ENCODE measurements at regions of chr10 and their contacts with region 1.

Region 1: GRCh38 chr10:123582084-123582989 is 83.8 kb upstream of the GPR26 start:
- DNase-seq: peak; percentile 75 to 90
- H3K4me3 ChIP-seq: no peak overlapping the region
- H3K27ac ChIP-seq: no peak overlapping the region
- H3K4me1 ChIP-seq: peaks cover 10 to 18% (median 14%) of the 10 kb centered on the region in 4 donors
- H3K27me3 ChIP-seq: peaks cover 0 to 52% (median 11%) of the 10 kb centered on the region in 3 donors
- CTCF ChIP-seq: peak in 5 of 7 experiments; percentile 27 to 81 (median 69)
- EP300 ChIP-seq: no peak
- POLR2A ChIP-seq: no peak

Region 2: DNA sequence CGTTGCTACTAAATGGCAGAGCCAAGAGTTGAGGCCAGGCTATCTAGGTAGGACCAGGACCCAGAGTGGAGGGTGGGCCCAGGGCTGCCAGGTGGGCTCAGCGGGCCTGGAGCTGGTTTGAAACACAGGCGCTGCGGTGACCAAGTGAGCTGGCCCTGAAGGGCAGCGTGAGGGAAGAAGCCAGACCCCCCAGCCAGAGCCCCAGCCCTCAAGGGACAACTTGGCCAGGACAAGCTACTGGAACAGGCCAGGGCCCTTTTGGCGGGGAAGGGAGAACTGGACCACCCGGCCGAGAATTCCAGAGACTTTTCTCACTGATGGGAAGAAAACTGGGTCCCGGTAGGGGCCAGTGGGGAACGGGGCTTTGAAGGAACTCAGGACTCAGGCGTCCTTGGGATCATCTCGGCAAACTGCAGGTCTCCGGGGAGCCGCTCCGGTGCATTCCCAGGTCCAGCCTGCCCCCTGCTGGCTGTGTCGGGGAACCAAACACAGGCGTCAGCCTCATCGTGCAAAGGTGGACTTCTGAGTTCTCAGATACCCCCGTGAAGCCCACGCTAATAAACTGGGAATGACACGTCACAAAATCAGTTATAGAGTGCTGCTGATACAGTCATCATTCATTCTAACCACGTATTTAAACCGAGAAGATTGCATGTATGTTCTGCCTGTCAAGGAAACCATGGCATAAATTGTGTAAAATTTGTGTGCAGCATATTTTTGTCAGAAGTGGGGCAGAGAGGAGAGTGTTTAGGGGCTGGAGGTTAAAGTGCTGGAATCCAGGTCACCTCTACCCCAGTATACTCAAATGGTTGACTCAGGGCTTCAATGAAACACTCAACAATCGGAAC is 385.3 kb after region 1 on chr10:
- intact Hi-C with region 1: loop called (anchors 2 kb)
- DNase-seq: peak; percentile 67 to 83
- H3K4me3 ChIP-seq: no peak overlapping the region
- H3K27ac ChIP-seq: no peak overlapping the region
- H3K4me1 ChIP-seq: peaks cover 0 to 23% (median 12%) of the 10 kb centered on the region in 4 donors
- H3K27me3 ChIP-seq: peaks cover 0 to 98% (median 68%) of the 10 kb centered on the region in 3 donors
- CTCF ChIP-seq: peak in 6 of 7 experiments; percentile 61 to 88 (median 74)
- EP300 ChIP-seq: no peak
- POLR2A ChIP-seq: no peak

Region 3: GRCh38 chr10:124388823-124389612 is 806.7 kb after region 1 on chr10:
- intact Hi-C with region 1: loop called (anchors 10 kb)
- DNase-seq: peak; percentile 95 to 97
- H3K4me3 ChIP-seq: peak overlapping the region; percentile 46 to 58 (median 50)
- H3K27ac ChIP-seq: peak overlapping the region in 3 of 5 donors; percentile 12 to 68 (median 19)
- H3K4me1 ChIP-seq: peaks cover 6 to 15% (median 12%) of the 10 kb centered on the region in 4 donors
- H3K27me3 ChIP-seq: peaks cover 0 to 12% (median 0%) of the 10 kb centered on the region in 3 donors
- CTCF ChIP-seq: peak in 5 of 7 experiments; percentile 79 to 98 (median 88)
- EP300 ChIP-seq: no peak
- POLR2A ChIP-seq: no peak

Measured in stomach (tissue), 19 donors.